Head of caudate nucleus (tissue), 42 donors: ENCODE measurements at regions of chr11 and their contacts with region 1.

Region 1: GRCh38 chr11:65625628-65626342 is 10.2 kb downstream of the PCNX3 start:
- DNase-seq: peak; percentile 56 to 90 (median 78)

Region 2: DNA sequence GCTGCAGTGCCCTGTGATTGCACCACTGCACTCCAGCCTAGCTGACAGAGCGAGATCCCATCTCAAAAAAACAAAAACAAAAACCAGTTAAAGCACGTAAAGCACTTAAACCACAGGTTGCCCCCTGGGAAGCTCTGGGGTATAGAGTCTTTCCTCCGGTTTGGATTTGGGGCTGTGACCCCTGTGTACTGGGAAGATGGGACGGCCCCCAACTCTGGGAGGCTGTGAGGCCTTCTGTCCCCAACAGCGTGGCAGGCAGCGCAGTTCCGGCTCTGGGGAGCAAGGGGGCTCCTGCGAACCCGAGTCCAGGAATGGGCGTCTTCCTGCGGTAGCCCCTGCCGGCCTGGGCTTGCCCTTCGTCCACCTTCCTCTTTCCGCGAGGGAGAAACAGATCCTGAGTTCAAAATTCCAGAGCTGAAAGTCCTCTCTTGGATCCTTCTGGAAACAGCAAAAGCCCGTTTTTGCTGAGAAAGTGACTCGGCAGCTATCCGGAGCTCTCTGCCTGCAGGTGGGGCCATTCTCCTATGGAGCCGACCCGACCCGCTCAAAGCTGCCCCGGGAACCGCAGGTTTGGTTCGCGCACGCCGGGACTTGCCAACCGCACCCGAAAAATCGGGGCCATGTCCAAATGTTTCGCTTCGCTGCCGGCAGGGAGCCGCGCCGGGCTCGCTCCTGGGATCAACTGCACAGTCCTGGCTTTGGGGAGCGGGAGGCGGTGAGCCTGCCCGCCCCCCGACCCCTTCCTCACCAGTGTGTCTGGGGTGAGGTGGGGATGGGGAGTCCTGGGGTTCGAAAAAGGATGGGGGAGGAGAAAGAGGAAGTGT is 400.3 kb before region 1 on chr11:
- intact Hi-C with region 1: no loop called
- DNase-seq: peak in 41 of 42 donors; percentile 11 to 80 (median 47)

Region 3: DNA sequence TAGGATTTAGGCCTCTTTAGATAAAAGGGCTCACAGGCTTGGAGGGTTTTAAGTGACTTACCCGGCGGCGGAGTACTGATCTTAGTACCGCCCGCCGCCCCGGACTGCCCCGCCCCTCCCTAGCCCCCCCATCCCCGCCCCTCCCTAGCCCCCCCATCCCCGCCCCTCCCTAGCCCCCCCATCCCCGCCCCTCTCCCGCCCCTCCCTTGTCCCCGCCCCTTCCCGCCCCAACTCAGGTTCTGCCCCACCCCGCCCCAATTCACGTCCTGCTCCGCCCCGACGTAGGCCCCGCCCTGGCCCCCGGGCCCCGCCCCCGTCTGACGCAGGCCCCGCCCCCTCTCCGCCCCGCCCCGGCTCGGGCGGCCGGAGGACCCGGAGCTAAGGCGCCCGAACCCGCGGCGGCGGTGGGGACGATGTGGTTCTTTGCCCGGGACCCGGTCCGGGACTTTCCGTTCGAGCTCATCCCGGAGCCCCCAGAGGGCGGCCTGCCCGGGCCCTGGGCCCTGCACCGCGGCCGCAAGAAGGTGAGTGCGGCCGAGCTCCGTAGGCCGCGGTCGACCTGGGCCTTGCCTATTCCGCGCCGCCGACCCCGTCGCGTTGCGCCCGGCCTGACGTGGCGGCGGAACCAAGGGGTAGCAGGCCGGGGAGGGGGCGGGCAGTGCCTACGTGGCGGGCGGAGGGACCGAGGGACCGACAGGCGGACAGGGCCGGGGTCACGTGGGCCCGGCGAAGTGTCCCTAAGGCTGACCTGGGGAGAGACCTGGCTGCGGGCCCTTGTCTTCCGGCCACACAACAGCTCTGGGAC is 100.8 kb before region 1 on chr11 and contains the start of gene SCYL1:
- intact Hi-C with region 1: no loop called
- DNase-seq: peak; percentile 61 to 97 (median 91)

Region 4: DNA sequence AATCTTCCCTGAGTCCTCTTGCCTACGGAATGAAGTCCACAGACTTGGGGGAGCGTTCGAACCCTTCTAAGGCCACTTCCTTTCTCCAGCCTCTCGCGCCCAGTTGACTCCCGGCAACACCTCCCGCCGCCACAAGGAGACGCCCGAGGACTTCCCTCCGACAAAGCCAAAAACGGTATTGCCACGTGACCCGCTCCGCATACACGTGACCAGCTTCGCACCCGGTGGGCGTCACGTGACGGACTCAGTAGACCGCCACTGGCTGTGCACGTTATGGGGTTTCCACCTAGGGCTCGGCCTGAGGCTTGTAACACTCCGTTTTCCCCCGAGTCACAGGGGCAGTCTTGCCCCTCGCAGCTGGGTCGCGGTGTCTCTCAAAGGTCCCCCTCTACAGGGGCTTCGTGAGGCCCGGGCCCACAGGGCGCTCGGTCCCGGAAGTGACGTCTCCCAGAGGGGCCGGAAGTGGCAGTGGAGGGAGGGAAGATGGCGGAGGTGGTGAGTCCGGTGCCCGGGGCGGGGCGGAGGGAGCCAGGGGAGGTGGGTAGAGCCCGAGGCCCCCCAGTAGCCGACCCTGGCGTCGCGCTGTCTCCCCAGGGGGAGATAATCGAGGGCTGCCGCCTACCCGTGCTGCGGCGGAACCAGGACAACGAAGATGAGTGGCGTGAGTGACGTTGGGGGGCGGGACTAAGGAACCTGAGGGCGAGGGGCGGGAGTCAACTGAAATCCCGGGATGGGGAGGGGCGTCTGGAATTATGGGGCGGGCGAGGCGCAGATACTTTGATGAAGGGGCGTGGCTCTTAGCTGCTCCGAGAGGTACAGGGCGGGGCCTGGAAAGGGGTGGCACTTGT is 86.2 kb after region 1 on chr11 and contains the start of gene KAT5:
- intact Hi-C with region 1: loop called (anchors 10 kb)
- DNase-seq: peak; percentile 95 to 100 (median 98)

Region 5: GRCh38 chr11:65817835-65818742 is 192.3 kb after region 1 on chr11:
- intact Hi-C with region 1: loop called (anchors 10 kb)
- DNase-seq: peak; percentile 87 to 99 (median 95)

Region 6: DNA sequence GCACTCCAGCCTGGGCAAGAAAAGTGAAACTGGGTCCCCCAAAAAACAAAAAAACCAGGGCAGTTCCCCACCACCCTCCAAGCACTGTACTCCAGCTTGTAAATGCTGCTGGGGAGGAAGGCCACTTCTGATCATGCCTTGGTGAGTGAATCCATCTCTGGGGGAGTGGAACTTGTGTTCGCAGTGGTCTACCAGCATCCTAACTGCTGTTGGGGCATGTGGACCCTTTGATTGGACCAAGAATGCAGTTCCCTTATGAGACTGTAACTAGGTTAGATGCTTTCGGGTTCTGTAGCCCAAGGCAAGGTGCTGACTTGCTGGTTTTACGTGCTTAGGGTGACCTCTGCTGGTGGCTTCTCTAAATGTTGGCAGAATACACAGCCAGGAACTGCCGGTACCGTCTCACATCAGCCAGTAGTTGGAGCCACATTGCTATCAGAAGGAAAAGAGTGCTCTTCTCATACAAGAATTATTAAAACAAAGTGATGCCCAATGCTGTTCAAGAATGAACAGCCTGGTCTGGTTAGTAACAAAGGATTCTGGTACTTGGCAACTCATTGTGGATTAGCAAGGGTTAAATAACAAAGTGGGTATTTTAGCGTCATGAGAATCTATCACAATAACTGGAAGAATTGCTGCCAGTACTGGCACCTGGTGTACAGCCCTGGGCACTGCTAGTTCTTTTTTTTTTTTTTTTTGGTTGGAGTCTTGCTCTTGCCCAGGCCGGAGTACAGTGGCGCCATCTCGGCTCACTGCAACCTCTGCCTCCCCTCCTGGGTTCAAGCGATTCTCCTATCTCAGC is 363.2 kb after region 1 on chr11:
- intact Hi-C with region 1: loop called (anchors 10 kb)
- DNase-seq: peak; percentile 56 to 96 (median 92)